ENCODE measurements at regions of chr15 and their contacts with region 1.

Region 1: DNA sequence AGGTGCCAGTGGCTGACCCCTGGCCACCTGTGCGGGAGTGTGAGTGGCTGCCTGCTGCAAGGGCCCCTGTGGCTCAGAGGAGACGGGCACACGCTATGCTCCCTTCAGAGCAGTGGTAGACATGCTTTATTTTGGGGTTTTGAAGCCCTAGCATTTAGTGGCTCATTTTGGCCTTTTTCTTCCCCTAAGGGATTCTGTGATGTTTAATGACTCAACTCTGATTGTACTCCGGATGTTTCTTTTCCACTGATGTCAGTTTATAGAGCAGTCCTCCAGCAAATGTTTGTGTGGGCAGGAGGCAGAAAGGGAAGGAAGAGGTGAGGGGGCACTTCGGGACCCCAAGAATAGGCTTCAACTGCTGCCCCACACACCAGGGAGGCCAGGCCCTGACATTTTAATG is 288.9 kb upstream of the C2CD4B start:
- DNase-seq: no peak
- ATAC-seq: peak; percentile 31
- H3K4me3 ChIP-seq: no peak overlapping the region
- H3K27ac ChIP-seq: peak overlapping the region; percentile 72 to 90
- H3K4me1 ChIP-seq: peaks cover 9 to 22% of the 10 kb centered on the region in 2 donors
- H3K27me3 ChIP-seq: no peaks in the 10 kb centered on the region

Region 2: GRCh38 chr15:62344806-62345539 is 109.0 kb before region 1 on chr15:
- intact Hi-C with region 1: no loop called
- DNase-seq: peak in 1 of 2 donors; percentile 60
- ATAC-seq: peak; percentile 67
- H3K4me3 ChIP-seq: no peak overlapping the region
- H3K27ac ChIP-seq: no peak overlapping the region
- H3K4me1 ChIP-seq: no peaks in the 10 kb centered on the region
- H3K27me3 ChIP-seq: no peaks in the 10 kb centered on the region

Region 3: DNA sequence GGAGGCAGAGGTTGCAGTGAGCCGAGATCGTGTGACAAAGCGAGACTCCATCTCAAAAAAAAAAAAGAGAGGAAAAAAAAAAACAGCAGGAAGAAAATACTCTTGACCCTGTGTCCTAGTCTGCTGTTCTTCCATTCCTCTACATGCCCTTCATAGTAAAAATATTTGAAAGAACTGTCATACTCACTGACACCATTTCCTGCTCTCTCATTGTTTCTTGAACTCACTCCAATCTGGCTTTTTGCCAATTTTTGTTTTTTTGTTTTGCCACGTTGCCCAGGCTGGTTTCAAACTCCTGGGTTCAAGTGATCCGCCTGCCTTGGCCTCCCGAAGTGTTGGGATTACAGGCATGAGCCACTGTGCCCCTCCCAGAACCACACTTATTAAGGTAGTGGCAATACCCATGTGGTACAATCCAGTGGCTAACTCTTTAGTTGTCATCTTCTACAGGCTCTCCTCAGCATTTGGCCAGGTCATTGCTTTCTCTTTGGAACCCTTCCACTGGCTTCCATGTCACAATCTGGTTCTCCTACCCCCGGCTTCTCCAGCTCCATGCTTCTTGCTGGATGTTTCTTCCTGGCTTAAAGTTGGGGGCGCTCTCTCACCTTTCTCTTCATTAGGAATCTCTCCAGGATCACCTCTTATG is 50.7 kb before region 1 on chr15:
- intact Hi-C with region 1: loop called in 1 of 2 experiments (anchors 5 kb)
- DNase-seq: no peak
- ATAC-seq: no peak
- H3K4me3 ChIP-seq: no peak overlapping the region
- H3K27ac ChIP-seq: peak overlapping the region in 1 of 2 donors; percentile 37
- H3K4me1 ChIP-seq: peaks cover 0 to 5% of the 10 kb centered on the region in 2 donors
- H3K27me3 ChIP-seq: no peaks in the 10 kb centered on the region

Region 4: DNA sequence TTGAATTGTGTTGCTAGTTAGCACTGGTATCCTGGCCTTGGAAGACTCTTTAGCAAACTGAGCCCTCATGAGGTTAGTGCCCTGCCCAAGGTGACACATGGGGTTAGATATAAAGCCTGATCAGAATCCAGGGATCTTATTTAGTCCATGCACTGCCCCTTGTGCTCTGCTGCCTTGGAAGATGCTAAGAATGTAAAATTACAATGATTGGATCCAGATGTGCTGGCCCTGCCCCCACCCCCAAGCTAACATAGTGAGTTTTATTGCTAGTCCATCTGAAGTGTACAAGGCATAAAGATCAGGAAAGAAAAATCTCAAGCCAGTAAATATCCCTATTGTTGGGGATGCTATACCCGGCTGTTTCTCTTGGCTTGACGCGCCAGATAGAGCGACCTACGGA is 40.8 kb before region 1 on chr15:
- intact Hi-C with region 1: loop called (anchors 5 kb)
- DNase-seq: no peak
- ATAC-seq: no peak
- H3K4me3 ChIP-seq: no peak overlapping the region
- H3K27ac ChIP-seq: no peak overlapping the region
- H3K4me1 ChIP-seq: peaks cover 11 to 34% of the 10 kb centered on the region in 2 donors
- H3K27me3 ChIP-seq: no peaks in the 10 kb centered on the region

Region 5: DNA sequence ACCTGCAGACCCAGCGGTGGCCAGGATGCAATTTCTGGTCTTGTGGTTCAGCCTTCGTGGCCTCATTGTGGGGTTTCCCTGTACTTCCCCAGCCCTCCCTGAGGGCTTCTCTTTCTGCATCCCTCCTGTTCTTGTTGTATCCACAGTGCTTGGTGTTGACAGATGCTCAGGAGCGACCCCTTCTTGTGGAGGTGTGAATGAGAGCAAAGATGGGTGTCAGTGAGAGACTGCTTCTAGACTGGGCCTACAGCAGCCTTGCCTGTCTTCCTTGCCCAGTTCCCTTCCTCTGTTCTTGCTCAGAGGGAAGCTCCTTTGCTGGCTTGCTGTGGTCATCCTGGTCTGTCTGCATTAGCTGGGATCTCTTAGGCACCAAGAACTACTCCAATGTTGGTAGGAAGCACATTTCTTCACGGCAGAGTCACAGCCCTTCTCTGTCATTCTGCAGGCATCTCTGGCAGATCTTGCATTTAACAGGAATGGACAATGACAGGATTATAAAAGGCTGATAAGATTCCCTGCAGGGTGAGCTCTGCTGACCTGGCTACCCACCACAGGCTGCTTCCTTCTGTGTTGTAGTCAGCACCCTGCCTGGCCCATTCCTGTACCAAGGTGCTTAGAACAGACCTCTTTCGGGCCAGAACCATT is 28.9 kb after region 1 on chr15:
- intact Hi-C with region 1: no loop called
- DNase-seq: no peak
- ATAC-seq: no peak
- H3K4me3 ChIP-seq: no peak overlapping the region
- H3K27ac ChIP-seq: no peak overlapping the region
- H3K4me1 ChIP-seq: peaks cover 0 to 3% of the 10 kb centered on the region in 2 donors
- H3K27me3 ChIP-seq: no peaks in the 10 kb centered on the region

Region 6: DNA sequence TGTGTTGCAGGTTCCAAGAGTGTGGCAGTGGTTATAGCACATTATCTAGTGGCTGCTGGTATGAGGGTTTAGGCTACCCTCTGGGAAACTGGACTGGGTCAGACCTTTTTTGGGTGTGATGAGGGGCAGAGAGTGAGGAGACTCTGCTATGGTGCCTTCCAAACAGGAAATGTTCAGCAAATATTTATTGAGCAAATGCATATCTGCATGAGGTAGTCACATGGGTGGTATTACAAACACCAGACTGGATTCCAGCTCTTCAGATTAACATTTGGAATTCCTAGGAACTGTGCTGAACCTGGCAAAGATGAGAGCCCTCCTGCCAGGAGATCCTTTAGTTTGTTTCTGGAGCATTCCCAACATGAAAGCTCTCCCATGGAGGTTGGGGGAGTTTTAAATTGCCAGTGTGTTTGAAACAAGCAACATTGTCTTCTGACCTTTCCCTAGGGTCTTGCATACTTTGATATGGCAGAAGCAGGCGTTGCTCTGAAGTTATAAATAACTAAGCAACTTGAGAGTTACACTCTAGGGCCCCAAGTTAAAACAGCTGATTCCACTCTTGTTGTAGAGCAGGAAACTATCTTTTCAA is 52.3 kb after region 1 on chr15:
- intact Hi-C with region 1: no loop called
- DNase-seq: no peak
- ATAC-seq: peak; percentile 59
- H3K4me3 ChIP-seq: no peak overlapping the region
- H3K27ac ChIP-seq: peak overlapping the region; percentile 77 to 94
- H3K4me1 ChIP-seq: peaks cover 2 to 18% of the 10 kb centered on the region in 2 donors
- H3K27me3 ChIP-seq: no peaks in the 10 kb centered on the region